RWPE1 (cell line): ENCODE measurements at regions of chr19 and their contacts with region 1.

Region 1: DNA sequence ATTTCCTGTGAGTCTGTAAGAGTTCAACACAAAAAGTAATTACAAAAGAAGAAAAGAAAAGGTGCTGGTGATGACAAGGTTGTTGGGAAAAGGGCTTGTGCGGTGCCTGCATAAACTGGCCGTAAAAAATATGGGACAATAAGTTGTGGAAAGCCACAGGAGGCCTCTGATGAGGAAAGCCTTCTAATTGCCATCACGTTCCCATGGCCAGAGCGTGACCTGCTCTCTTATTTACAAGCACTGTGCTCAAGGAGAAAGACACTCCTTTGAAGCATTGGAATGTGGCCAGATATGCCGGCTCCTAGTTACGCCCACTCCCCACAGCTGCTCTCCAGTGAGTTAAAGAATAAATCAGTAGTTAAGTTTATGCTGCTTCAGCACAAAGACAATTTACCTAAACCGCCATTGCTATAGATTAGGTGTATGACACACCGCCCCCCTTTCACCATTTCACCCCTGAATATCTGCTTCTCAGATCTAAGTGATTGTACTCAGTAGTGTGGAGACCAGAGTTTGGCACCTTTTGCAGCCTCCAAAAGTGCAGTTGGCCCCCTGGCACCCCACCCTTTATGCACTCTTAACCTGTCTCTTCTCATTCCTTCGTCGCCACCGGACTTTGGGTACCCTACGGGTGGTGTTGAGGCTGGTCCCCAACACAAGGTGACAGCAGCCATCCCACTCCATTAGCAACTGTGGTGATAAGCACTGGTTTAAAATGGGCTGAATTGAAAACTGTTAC is 8.1 kb upstream of the PGLYRP1 start:
- DNase-seq: no peak
- H3K27ac ChIP-seq: no peak overlapping the region
- CTCF ChIP-seq: no peak

Region 2: DNA sequence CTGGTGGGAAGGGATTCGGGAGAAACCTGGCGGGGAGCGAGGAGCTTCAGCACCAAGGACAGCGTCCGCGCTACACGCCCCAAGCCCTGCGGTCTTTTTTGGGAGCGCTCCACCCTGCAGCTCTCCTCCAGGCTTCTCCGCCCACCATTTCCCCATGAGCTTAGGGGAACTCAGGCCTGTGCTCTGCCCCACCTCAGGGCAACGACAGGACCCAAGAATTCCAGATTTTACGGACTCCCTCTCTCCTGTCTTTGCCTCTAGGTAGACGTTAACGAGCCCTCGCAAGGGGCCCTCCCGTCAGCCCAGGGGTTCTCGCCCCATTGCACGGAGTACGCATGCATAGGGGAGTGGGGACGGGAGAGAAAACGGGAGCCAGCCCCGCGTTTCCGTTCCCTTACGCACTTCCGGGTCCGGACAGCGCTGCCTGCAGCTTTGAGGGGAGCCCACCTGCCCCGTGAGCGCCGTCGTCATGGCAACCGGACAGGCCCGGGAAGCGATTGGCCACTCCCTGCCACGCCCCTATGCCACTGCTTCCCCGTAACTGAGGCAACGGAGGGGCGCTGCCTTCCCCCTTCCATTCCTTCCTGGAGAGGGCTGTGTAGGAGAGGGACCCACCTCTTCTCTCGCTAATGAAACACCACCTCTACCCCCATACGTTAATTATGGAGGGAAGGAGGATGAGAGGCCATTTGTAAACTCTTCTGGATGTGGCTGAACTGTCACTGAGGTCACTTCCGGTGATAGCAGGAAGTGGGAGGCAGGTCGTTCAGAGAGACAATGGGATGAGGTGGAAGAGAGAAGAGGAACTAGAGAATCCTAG is 78.1 kb before region 1 on chr19:
- CTCF ChIA-PET with region 1: no interaction called
- POLR2A ChIA-PET with region 1: no interaction called
- DNase-seq: peak; percentile 71
- H3K27ac ChIP-seq: no peak overlapping the region
- CTCF ChIP-seq: no peak

Region 3: GRCh38 chr19:46000491-46001246 is 30.3 kb before region 1 on chr19:
- CTCF ChIA-PET with region 1: no interaction called
- POLR2A ChIA-PET with region 1: no interaction called
- DNase-seq: peak; percentile 60
- H3K27ac ChIP-seq: no peak overlapping the region
- CTCF ChIP-seq: no peak

Region 4: DNA sequence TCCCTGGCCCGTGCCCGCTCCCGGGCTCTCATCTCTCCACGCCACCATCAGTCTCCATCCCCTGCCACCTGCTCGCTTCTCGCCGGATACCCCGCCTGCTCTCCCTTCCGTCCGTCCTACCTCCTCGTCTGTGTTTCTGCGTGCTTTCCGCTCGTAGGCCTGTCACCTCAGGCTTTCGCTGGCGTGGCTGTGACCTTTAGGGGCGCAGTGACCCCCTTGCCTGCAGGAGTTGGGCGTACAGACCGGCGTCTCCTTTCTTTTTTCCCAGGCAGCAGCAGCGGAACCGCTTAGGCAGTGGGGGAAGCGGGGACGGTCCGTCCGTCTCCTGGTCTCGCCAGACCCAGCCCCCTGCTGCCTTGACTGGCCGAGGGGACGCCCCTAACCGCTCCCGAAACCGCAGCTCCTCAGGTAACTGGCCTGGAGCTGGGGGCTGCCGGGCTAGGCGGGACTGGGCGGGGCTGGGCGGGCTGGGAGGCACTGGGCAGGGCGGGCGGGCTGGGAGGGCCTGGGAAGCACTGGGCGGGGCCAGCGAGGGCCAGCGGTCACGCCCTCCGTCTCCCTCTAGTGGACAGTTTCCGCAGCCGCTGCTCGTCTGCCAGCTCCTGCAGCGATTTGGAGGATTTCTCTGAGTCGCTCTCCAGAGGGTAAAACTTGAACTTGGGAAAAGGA is 14.4 kb before region 1 on chr19:
- CTCF ChIA-PET with region 1: interaction called, 13 read pairs
- POLR2A ChIA-PET with region 1: interaction called, 6 read pairs
- DNase-seq: peak; percentile 77
- H3K27ac ChIP-seq: peak overlapping the region; percentile 57
- CTCF ChIP-seq: peak; percentile 85

Region 5: GRCh38 chr19:46147791-46148288 is 116.9 kb after region 1 on chr19 and contains the start of gene IGFL2:
- CTCF ChIA-PET with region 1: no interaction called
- POLR2A ChIA-PET with region 1: no interaction called
- DNase-seq: peak; percentile 14
- H3K27ac ChIP-seq: no peak within 1 kb of the TSS
- CTCF ChIP-seq: no peak

Region 6: DNA sequence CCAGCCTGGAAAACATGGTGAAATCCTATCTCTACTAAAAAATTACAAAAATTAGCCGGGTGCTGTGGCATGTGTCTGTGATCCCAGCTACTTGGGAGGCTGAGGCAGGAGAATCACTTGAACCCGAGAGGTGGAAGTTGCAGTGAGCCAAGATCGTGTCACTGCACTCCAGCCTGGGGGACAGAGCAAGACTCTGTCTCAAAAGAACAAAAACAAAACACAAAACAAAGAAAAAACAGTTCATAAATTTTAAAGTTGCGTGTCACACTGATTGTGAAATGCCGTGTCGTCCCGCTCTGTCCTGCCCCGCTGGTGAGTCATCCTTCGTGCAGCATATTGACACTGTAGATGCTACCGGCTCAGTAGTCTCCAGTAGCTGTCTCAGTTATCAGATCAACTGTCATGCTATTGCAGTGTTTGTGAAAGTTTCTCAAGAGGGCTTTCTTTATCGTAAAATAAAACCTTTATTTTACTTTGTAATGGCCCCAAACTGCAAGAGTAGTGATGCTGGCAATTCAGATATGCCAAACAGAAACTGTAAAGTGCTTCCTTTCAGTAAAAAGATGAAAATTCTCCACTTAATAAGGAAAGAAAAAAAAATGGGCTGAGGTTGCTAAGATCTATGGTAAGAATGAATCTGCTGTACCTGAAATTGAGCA is 162.1 kb after region 1 on chr19:
- CTCF ChIA-PET with region 1: interaction called, 12 read pairs
- POLR2A ChIA-PET with region 1: no interaction called
- DNase-seq: peak; percentile 70
- H3K27ac ChIP-seq: peak overlapping the region; percentile 91
- CTCF ChIP-seq: no peak

Region 7: GRCh38 chr19:46265217-46265828 is 234.3 kb after region 1 on chr19:
- CTCF ChIA-PET with region 1: interaction called, 19 read pairs
- POLR2A ChIA-PET with region 1: no interaction called
- DNase-seq: peak; percentile 79
- H3K27ac ChIP-seq: no peak overlapping the region
- CTCF ChIP-seq: peak; percentile 78